Common myeloid progenitor, CD34-positive (primary cell): ENCODE measurements at regions of chr3 and their contacts with region 1.

Region 1: GRCh38 chr3:48674505-48674904 is 11.2 kb downstream of the NCKIPSD start:
- DNase-seq: no peak
- H3K4me3 ChIP-seq: no peak overlapping the region
- H3K27ac ChIP-seq: no peak overlapping the region
- H3K4me1 ChIP-seq: no peaks in the 10 kb centered on the region
- H3K27me3 ChIP-seq: no peaks in the 10 kb centered on the region

Region 2: GRCh38 chr3:48663415-48664312 is 10.8 kb before region 1 on chr3:
- CTCF ChIA-PET with region 1: interaction called, 25 read pairs
- POLR2A ChIA-PET with region 1: interaction called, 4 read pairs
- DNase-seq: peak; percentile 95 to 96 (median 96)
- H3K4me3 ChIP-seq: peak overlapping the region; percentile 24 to 81 (median 68)
- H3K27ac ChIP-seq: peak overlapping the region in 1 of 2 experiments; percentile 64
- H3K4me1 ChIP-seq: peaks cover 0 to 31% (median 30%) of the 10 kb centered on the region in 4 experiments
- H3K27me3 ChIP-seq: peaks cover 2 to 44% (median 10%) of the 10 kb centered on the region in 5 experiments